ENCODE measurements at regions of chr2 and their contacts with region 1.

Region 1: GRCh38 chr2:55268907-55269644 is at the start of gene MTIF2:
- ATAC-seq: peak; percentile 99 to 100 (median 100)
- H3K4me3 ChIP-seq: peak within 1 kb of the TSS; percentile 56 to 85 (median 74)
- H3K27ac ChIP-seq: peak within 1 kb of the TSS; percentile 62 to 70
- H3K4me1 ChIP-seq: peaks cover 7 to 8% of the 10 kb centered on the region in 2 donors
- total RNA-seq, gene MTIF2: 25.6 to 65.4 (median 30.7) TPM

Region 2: GRCh38 chr2:55419679-55420438 is 150.8 kb after region 1 on chr2 and contains the start of gene CCDC88A:
- in situ Hi-C with region 1: loop called in 1 of 9 experiments (anchors 25 kb)
- ATAC-seq: peak; percentile 86 to 95 (median 94)
- H3K4me3 ChIP-seq: peak within 1 kb of the TSS; percentile 74 to 97 (median 82)
- H3K27ac ChIP-seq: peak within 1 kb of the TSS; percentile 77 to 82
- H3K4me1 ChIP-seq: peaks cover 6 to 14% of the 10 kb centered on the region in 2 donors
- total RNA-seq, gene CCDC88A: 25.6 to 86.9 (median 81.0) TPM

Region 3: GRCh38 chr2:57084697-57085281 is 1815.7 kb after region 1 on chr2:
- in situ Hi-C with region 1: no loop called
- ATAC-seq: no peak
- H3K4me3 ChIP-seq: no peak overlapping the region
- H3K27ac ChIP-seq: no peak overlapping the region
- H3K4me1 ChIP-seq: no peaks in the 10 kb centered on the region

Measured in motor neuron (in vitro differentiated cells).